GM12878 (cell line): ENCODE measurements at regions of chr15 and their contacts with region 1.

Region 1: GRCh38 chr15:41465822-41466421 is 27.8 kb upstream of the ITPKA start:
- DNase-seq: no peak
- ATAC-seq: peak; percentile 65
- H3K4me3 ChIP-seq: no peak overlapping the region
- H3K27ac ChIP-seq: no peak overlapping the region
- H3K4me1 ChIP-seq: no peaks in the 10 kb centered on the region
- H3K27me3 ChIP-seq: no peaks in the 10 kb centered on the region
- CTCF ChIP-seq: peak; percentile 96 to 99 (median 99)
- EP300 ChIP-seq: no peak
- POLR2A ChIP-seq: no peak
- RAD21 ChIP-seq: peak; percentile 96

Region 2: GRCh38 chr15:41483115-41483514 is 17.2 kb after region 1 on chr15:
- CTCF ChIA-PET with region 1: interaction called, 12 read pairs
- POLR2A ChIA-PET with region 1: no interaction called
- RAD21 ChIA-PET with region 1: interaction called, 8 read pairs
- SMC1A ChIA-PET with region 1: interaction called, 9 read pairs
- in situ Hi-C with region 1: no loop called
- intact Hi-C with region 1: no loop called
- DNase-seq: peak; percentile 57
- ATAC-seq: peak; percentile 97
- H3K4me3 ChIP-seq: no peak overlapping the region
- H3K27ac ChIP-seq: peak overlapping the region; percentile 62
- H3K4me1 ChIP-seq: peaks cover 13% of the 10 kb centered on the region
- H3K27me3 ChIP-seq: no peaks in the 10 kb centered on the region
- CTCF ChIP-seq: no peak
- EP300 ChIP-seq: 0 out of 4 replicates have a peak, but pooled peaks of 1 of the 2 experiments have one; percentile 56
- POLR2A ChIP-seq: no peak
- RAD21 ChIP-seq: no peak

Region 3: DNA sequence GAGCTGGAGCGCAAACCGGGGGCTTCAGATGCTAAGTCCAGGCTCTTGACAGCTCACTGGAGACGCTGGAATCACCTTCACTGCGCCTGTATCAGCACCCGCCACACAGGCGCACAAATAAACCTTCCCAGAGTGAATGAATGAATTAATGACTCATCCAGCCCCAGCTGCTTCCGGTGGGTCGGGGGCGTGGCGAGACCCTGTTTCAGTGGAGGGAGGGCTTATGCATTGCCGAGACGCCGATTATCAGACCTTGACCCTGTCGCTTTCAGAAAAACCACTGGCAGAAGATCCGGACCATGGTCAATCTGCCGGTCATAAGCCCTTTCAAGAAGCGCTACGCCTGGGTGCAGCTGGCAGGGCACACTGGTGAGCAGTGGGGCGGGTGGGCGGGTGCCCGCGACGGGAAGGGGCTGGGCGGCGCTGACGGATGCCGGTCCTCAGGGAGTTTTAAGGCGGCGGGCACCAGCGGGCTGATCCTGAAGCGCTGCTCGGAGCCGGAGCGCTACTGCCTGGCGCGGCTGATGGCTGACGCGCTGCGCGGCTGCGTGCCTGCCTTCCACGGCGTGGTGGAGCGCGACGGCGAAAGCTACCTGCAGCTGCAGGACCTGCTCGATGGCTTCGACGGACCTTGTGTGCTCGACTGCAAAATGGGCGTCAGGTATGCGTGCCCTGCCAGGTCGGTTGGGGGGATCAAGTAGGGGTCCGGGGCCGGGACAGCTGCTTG is 35.4 kb after region 1 on chr15:
- CTCF ChIA-PET with region 1: interaction called, 29 read pairs
- POLR2A ChIA-PET with region 1: no interaction called
- RAD21 ChIA-PET with region 1: interaction called, 4 read pairs
- SMC1A ChIA-PET with region 1: interaction called, 5 read pairs
- in situ Hi-C with region 1: no loop called
- intact Hi-C with region 1: no loop called
- DNase-seq: no peak
- ATAC-seq: peak; percentile 76
- H3K4me3 ChIP-seq: peak overlapping the region; percentile 44; the same call in 1 of the 2 replicates
- H3K27ac ChIP-seq: no peak overlapping the region
- H3K4me1 ChIP-seq: peaks cover 8% of the 10 kb centered on the region
- H3K27me3 ChIP-seq: peaks cover 12 to 15% of the 10 kb centered on the region in 2 experiments
- CTCF ChIP-seq: no peak
- EP300 ChIP-seq: no peak
- POLR2A ChIP-seq: no peak
- RAD21 ChIP-seq: no peak

Region 4: GRCh38 chr15:41512940-41513510 is 47.1 kb after region 1 on chr15:
- CTCF ChIA-PET with region 1: interaction called, 29 read pairs
- POLR2A ChIA-PET with region 1: interaction called, 4 read pairs
- RAD21 ChIA-PET with region 1: interaction called, 11 read pairs
- SMC1A ChIA-PET with region 1: interaction called, 11 read pairs
- in situ Hi-C with region 1: no loop called
- intact Hi-C with region 1: no loop called
- DNase-seq: no peak
- ATAC-seq: peak; percentile 64
- H3K4me3 ChIP-seq: peak overlapping the region; percentile 67
- H3K27ac ChIP-seq: no peak overlapping the region
- H3K4me1 ChIP-seq: peaks cover 23% of the 10 kb centered on the region
- H3K27me3 ChIP-seq: peaks cover 5 to 20% of the 10 kb centered on the region in 2 experiments
- CTCF ChIP-seq: no peak
- EP300 ChIP-seq: no peak
- POLR2A ChIP-seq: no peak
- RAD21 ChIP-seq: no peak

Region 5: GRCh38 chr15:41603941-41604911 is 138.3 kb after region 1 on chr15:
- CTCF ChIA-PET with region 1: interaction called, 25 read pairs
- POLR2A ChIA-PET with region 1: no interaction called
- RAD21 ChIA-PET with region 1: interaction called, 5 read pairs
- SMC1A ChIA-PET with region 1: interaction called, 14 read pairs
- in situ Hi-C with region 1: no loop called
- intact Hi-C with region 1: loop called (anchors 5 kb)
- DNase-seq: no peak
- ATAC-seq: peak; percentile 97
- H3K4me3 ChIP-seq: no peak overlapping the region
- H3K27ac ChIP-seq: no peak overlapping the region
- H3K4me1 ChIP-seq: no peaks in the 10 kb centered on the region
- H3K27me3 ChIP-seq: no peaks in the 10 kb centered on the region
- CTCF ChIP-seq: peak; percentile 68 to 77 (median 75)
- EP300 ChIP-seq: no peak
- POLR2A ChIP-seq: no peak
- RAD21 ChIP-seq: peak; percentile 64

Region 6: GRCh38 chr15:41811432-41812195 is 345.7 kb after region 1 on chr15:
- CTCF ChIA-PET with region 1: interaction called, 18 read pairs
- POLR2A ChIA-PET with region 1: no interaction called
- RAD21 ChIA-PET with region 1: interaction called, 20 read pairs
- SMC1A ChIA-PET with region 1: interaction called, 10 read pairs
- in situ Hi-C with region 1: no loop called
- intact Hi-C with region 1: loop called (anchors 5 kb)
- DNase-seq: no peak
- ATAC-seq: peak; percentile 98
- H3K4me3 ChIP-seq: no peak overlapping the region
- H3K27ac ChIP-seq: no peak overlapping the region
- H3K4me1 ChIP-seq: no peaks in the 10 kb centered on the region
- H3K27me3 ChIP-seq: no peaks in the 10 kb centered on the region
- CTCF ChIP-seq: peak; percentile 90 to 94 (median 92)
- EP300 ChIP-seq: no peak
- POLR2A ChIP-seq: no peak
- RAD21 ChIP-seq: peak; percentile 98